ENCODE measurements at regions of chr3 and their contacts with region 1.

Region 1: DNA sequence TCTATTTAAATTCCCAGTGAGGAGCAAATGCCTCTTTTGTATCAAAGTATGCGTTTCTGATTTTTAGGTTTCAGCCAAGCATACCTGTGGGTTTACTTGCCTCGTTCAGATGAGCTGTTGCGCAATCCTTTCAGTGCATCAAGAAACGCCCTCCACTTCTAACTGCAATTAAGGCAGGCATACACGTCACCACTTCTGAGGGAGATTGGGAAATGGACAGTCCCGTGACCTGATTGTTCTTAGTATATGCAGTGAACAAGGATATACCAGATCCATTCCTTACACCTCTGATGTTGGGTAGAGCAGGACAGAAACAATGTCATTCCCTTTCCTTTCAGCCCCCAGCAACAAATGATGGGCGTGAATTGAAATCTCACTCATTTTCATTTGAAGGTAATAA is 219.0 kb downstream of the ITPR1 start:
- DNase-seq: peak in 1 of 9 experiments; percentile 16
- ATAC-seq: no peak
- H3K4me3 ChIP-seq: no peak overlapping the region
- H3K4me3 Mint-ChIP-seq: no peak overlapping the region
- H3K27ac ChIP-seq: no peak overlapping the region
- H3K27ac Mint-ChIP-seq: no peak overlapping the region
- H3K4me1 ChIP-seq: no peaks in the 10 kb centered on the region
- H3K4me1 Mint-ChIP-seq: no peaks in the 10 kb centered on the region
- H3K27me3 ChIP-seq: no peaks in the 10 kb centered on the region
- H3K27me3 Mint-ChIP-seq: no peaks in the 10 kb centered on the region
- CTCF ChIP-seq: no peak

Region 2: DNA sequence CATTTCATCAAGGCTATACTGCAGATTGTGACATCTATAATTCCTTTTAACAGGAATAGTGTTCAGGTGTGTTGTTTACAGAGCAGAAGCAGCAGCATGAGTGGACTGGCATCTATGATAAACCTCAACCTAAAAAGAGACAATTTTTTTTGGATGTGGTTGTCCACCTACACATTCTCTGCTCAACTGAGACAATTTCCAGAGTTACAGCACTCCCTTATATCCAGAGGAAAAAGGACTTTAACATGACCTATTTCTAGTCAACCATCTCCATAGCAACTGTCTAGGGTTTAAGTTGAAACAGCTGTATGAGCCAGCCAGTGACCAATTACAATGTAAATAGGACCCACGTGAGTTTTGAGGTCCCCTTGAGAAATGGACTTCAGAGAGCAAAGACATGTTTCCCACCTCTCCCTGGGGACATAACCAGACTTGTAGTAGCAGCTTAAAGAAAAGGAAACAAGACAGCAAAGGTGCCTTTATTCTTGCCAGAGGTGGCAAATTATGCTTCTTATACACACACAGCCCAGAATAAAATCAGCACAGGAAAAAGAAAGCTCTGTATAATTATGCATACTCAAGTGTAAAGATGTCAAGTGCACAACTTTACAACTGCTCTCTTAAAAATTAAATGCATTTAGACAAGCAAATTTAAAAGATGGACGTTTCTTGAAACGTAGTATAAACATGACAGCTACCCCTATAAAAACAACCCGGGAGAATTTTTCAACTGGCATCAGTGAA is 285.4 kb before region 1 on chr3:
- CTCF ChIA-PET with region 1: no interaction called
- POLR2A ChIA-PET with region 1: no interaction called
- intact Hi-C with region 1: no loop called
- DNase-seq: no peak
- ATAC-seq: no peak
- H3K4me3 ChIP-seq: no peak overlapping the region
- H3K4me3 Mint-ChIP-seq: no peak overlapping the region
- H3K27ac ChIP-seq: no peak overlapping the region
- H3K27ac Mint-ChIP-seq: no peak overlapping the region
- H3K4me1 ChIP-seq: no peaks in the 10 kb centered on the region
- H3K4me1 Mint-ChIP-seq: peaks cover 5% of the 10 kb centered on the region
- H3K27me3 ChIP-seq: no peaks in the 10 kb centered on the region
- H3K27me3 Mint-ChIP-seq: no peaks in the 10 kb centered on the region
- CTCF ChIP-seq: no peak

Region 3: GRCh38 chr3:4571690-4572334 is 140.3 kb before region 1 on chr3:
- CTCF ChIA-PET with region 1: no interaction called
- POLR2A ChIA-PET with region 1: no interaction called
- intact Hi-C with region 1: no loop called
- DNase-seq: peak in 2 of 9 experiments; percentile 32 to 48
- ATAC-seq: peak; percentile 52
- H3K4me3 ChIP-seq: no peak overlapping the region
- H3K4me3 Mint-ChIP-seq: no peak overlapping the region
- H3K27ac ChIP-seq: no peak overlapping the region
- H3K27ac Mint-ChIP-seq: no peak overlapping the region
- H3K4me1 ChIP-seq: no peaks in the 10 kb centered on the region
- H3K4me1 Mint-ChIP-seq: peaks cover 17% of the 10 kb centered on the region
- H3K27me3 ChIP-seq: no peaks in the 10 kb centered on the region
- H3K27me3 Mint-ChIP-seq: no peaks in the 10 kb centered on the region
- CTCF ChIP-seq: no peak

Region 4: GRCh38 chr3:4693620-4694019 is 18.5 kb before region 1 on chr3:
- CTCF ChIA-PET with region 1: interaction called, 12 read pairs
- POLR2A ChIA-PET with region 1: no interaction called
- intact Hi-C with region 1: no loop called
- DNase-seq: no peak
- ATAC-seq: no peak
- H3K4me3 ChIP-seq: no peak overlapping the region
- H3K4me3 Mint-ChIP-seq: no peak overlapping the region
- H3K27ac ChIP-seq: no peak overlapping the region
- H3K27ac Mint-ChIP-seq: no peak overlapping the region
- H3K4me1 ChIP-seq: no peaks in the 10 kb centered on the region
- H3K4me1 Mint-ChIP-seq: no peaks in the 10 kb centered on the region
- H3K27me3 ChIP-seq: no peaks in the 10 kb centered on the region
- H3K27me3 Mint-ChIP-seq: no peaks in the 10 kb centered on the region
- CTCF ChIP-seq: no peak

Region 5: GRCh38 chr3:4818986-4819693 is 107.0 kb after region 1 on chr3:
- CTCF ChIA-PET with region 1: interaction called, 12 read pairs
- POLR2A ChIA-PET with region 1: no interaction called
- intact Hi-C with region 1: loop called (anchors 1 to 2 kb)
- DNase-seq: no peak
- ATAC-seq: no peak
- H3K4me3 ChIP-seq: no peak overlapping the region
- H3K4me3 Mint-ChIP-seq: no peak overlapping the region
- H3K27ac ChIP-seq: no peak overlapping the region
- H3K27ac Mint-ChIP-seq: peak overlapping the region; percentile 68
- H3K4me1 ChIP-seq: peaks cover 35% of the 10 kb centered on the region
- H3K4me1 Mint-ChIP-seq: peaks cover 40% of the 10 kb centered on the region
- H3K27me3 ChIP-seq: no peaks in the 10 kb centered on the region
- H3K27me3 Mint-ChIP-seq: no peaks in the 10 kb centered on the region
- CTCF ChIP-seq: no peak

Region 6: GRCh38 chr3:4978204-4978965 is 266.2 kb after region 1 on chr3:
- CTCF ChIA-PET with region 1: interaction called, 47 read pairs
- POLR2A ChIA-PET with region 1: no interaction called
- intact Hi-C with region 1: loop called (anchors 1 to 2 kb)
- DNase-seq: peak; percentile 52 to 92 (median 70)
- ATAC-seq: peak; percentile 43
- H3K4me3 ChIP-seq: peak overlapping the region; percentile 71 to 97
- H3K4me3 Mint-ChIP-seq: peak overlapping the region; percentile 97
- H3K27ac ChIP-seq: peak overlapping the region; percentile 70 to 95
- H3K27ac Mint-ChIP-seq: peak overlapping the region; percentile 96
- H3K4me1 ChIP-seq: peaks cover 46% of the 10 kb centered on the region
- H3K4me1 Mint-ChIP-seq: peaks cover 47% of the 10 kb centered on the region
- H3K27me3 ChIP-seq: no peaks in the 10 kb centered on the region
- H3K27me3 Mint-ChIP-seq: no peaks in the 10 kb centered on the region
- CTCF ChIP-seq: no peak

Region 7: GRCh38 chr3:5026331-5027218 is 314.4 kb after region 1 on chr3:
- CTCF ChIA-PET with region 1: interaction called, 83 read pairs
- POLR2A ChIA-PET with region 1: no interaction called
- intact Hi-C with region 1: loop called (anchors 1 kb)
- DNase-seq: peak in 8 of 9 experiments; percentile 41 to 90 (median 66)
- ATAC-seq: peak; percentile 74
- H3K4me3 ChIP-seq: peak overlapping the region; percentile 57 to 77
- H3K4me3 Mint-ChIP-seq: peak overlapping the region; percentile 80
- H3K27ac ChIP-seq: peak overlapping the region; percentile 33 to 39
- H3K27ac Mint-ChIP-seq: peak overlapping the region; percentile 77
- H3K4me1 ChIP-seq: peaks cover 4% of the 10 kb centered on the region
- H3K4me1 Mint-ChIP-seq: peaks cover 12% of the 10 kb centered on the region
- H3K27me3 ChIP-seq: no peaks in the 10 kb centered on the region
- H3K27me3 Mint-ChIP-seq: peaks cover 6% of the 10 kb centered on the region
- CTCF ChIP-seq: peak; percentile 52

Region 8: DNA sequence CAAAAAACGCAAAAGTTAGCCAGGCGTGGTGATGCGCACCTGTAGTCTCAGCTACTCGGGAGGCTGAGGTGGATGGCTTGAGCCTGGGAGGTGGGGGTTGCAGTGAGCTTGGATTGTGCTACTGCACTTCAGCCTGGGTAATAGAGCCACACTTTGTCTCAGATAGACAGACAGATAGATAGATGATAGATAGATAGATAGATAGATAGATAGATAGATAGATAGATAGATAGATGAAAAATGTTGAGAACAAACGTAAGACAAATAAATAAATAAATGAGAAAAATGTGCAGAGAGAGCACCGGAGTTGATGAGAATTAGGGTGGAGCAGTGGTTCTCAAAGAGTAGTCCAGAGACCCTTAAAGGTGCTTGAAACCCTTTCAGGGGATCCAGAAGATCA is 351.6 kb after region 1 on chr3:
- CTCF ChIA-PET with region 1: interaction called, 300 read pairs
- POLR2A ChIA-PET with region 1: no interaction called
- intact Hi-C with region 1: no loop called
- DNase-seq: no peak
- ATAC-seq: no peak
- H3K4me3 ChIP-seq: no peak overlapping the region
- H3K4me3 Mint-ChIP-seq: no peak overlapping the region
- H3K27ac ChIP-seq: no peak overlapping the region
- H3K27ac Mint-ChIP-seq: no peak overlapping the region
- H3K4me1 ChIP-seq: no peaks in the 10 kb centered on the region
- H3K4me1 Mint-ChIP-seq: no peaks in the 10 kb centered on the region
- H3K27me3 ChIP-seq: peaks cover 0 to 4% of the 10 kb centered on the region in 2 experiments
- H3K27me3 Mint-ChIP-seq: peaks cover 2% of the 10 kb centered on the region
- CTCF ChIP-seq: no peak

Measured in CD8-positive, alpha-beta T cell (primary cell).